B cell (primary cell): ENCODE measurements at regions of chr6 and their contacts with region 1.

Region 1: GRCh38 chr6:145734486-145735355 is 599 bp downstream of the EPM2A start:
- DNase-seq: peak; percentile 79
- ATAC-seq: peak; percentile 70
- H3K4me3 ChIP-seq: peak overlapping the region; percentile 12 to 90 (median 74)
- H3K4me3 Mint-ChIP-seq: peak overlapping the region; percentile 97
- H3K27ac ChIP-seq: peak overlapping the region; percentile 65 to 98
- H3K27ac Mint-ChIP-seq: peak overlapping the region; percentile 96
- H3K4me1 ChIP-seq: peaks cover 14 to 30% of the 10 kb centered on the region in 2 donors
- H3K4me1 Mint-ChIP-seq: peaks cover 31% of the 10 kb centered on the region
- H3K27me3 ChIP-seq: no peaks in the 10 kb centered on the region
- H3K27me3 Mint-ChIP-seq: no peaks in the 10 kb centered on the region
- CTCF ChIP-seq: no peak

Region 2: GRCh38 chr6:145814501-145815308 is 80.0 kb after region 1 on chr6 and contains the start of gene FBXO30:
- CTCF ChIA-PET with region 1: interaction called, 18 read pairs
- POLR2A ChIA-PET with region 1: interaction called, 21 read pairs
- intact Hi-C with region 1: loop called (anchors 1 kb)
- DNase-seq: peak; percentile 93
- ATAC-seq: peak; percentile 91
- H3K4me3 ChIP-seq: peak within 1 kb of the TSS; percentile 60 to 94 (median 90)
- H3K4me3 Mint-ChIP-seq: peak within 1 kb of the TSS; percentile 96
- H3K27ac ChIP-seq: peak within 1 kb of the TSS; percentile 76 to 89
- H3K27ac Mint-ChIP-seq: peak within 1 kb of the TSS; percentile 96
- H3K4me1 ChIP-seq: peaks cover 26 to 32% of the 10 kb centered on the region in 2 donors
- H3K4me1 Mint-ChIP-seq: peaks cover 44% of the 10 kb centered on the region
- H3K27me3 ChIP-seq: no peaks in the 10 kb centered on the region
- H3K27me3 Mint-ChIP-seq: no peaks in the 10 kb centered on the region
- CTCF ChIP-seq: peak; percentile 18
- total RNA-seq, gene FBXO30: 9.7 and 10.2 TPM in 2 replicates

Region 3: GRCh38 chr6:145865175-145865574 is 130.5 kb after region 1 on chr6:
- CTCF ChIA-PET with region 1: no interaction called
- POLR2A ChIA-PET with region 1: no interaction called
- intact Hi-C with region 1: loop called (anchors 2 kb)
- DNase-seq: peak; percentile 30
- ATAC-seq: no peak
- H3K4me3 ChIP-seq: peak overlapping the region in 1 of 5 experiments; percentile 6
- H3K4me3 Mint-ChIP-seq: peak overlapping the region; percentile 41
- H3K27ac ChIP-seq: peak overlapping the region; percentile 60 to 85
- H3K27ac Mint-ChIP-seq: peak overlapping the region; percentile 82
- H3K4me1 ChIP-seq: peaks cover 45 to 46% of the 10 kb centered on the region in 2 donors
- H3K4me1 Mint-ChIP-seq: peaks cover 51% of the 10 kb centered on the region
- H3K27me3 ChIP-seq: no peaks in the 10 kb centered on the region
- H3K27me3 Mint-ChIP-seq: no peaks in the 10 kb centered on the region
- CTCF ChIP-seq: no peak